ENCODE measurements at regions of chr1 and their contacts with region 1.

Region 1: GRCh38 chr1:94599095-94599813 is 57.7 kb upstream of the F3 start:
- DNase-seq: peak in 3 of 5 donors; percentile 33 to 58 (median 52)
- ATAC-seq: peak; percentile 56 to 90 (median 90)
- H3K4me3 ChIP-seq: no peak overlapping the region
- H3K27ac ChIP-seq: no peak overlapping the region
- H3K4me1 ChIP-seq: peaks cover 0 to 24% (median 0%) of the 10 kb centered on the region in 12 donors
- H3K27me3 ChIP-seq: peaks cover 0 to 26% (median 0%) of the 10 kb centered on the region in 9 donors
- CTCF ChIP-seq: peak in 11 of 12 donors; percentile 41 to 66 (median 52)
- POLR2A ChIP-seq: no peak

Region 2: DNA sequence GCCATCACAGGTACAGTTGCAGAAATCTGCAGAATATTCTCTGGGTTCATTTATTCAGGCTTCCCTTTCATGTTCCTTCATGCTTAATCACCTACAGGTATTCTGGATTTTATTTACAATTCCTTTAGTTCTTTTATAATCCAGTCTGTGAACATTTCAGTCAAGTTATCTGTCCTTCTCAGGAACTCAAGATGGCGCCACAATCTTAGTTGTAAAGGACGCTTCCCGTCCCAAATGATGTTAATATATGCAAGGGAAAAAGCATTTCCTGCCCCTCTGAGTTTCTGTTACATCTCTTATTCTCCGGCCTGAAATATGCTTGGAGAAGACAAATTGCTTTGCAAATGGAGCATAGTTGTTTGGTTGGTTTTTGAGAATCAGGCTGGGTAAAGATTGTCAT is 77.0 kb before region 1 on chr1:
- intact Hi-C with region 1: loop called in 6 of 10 experiments (anchors 2 to 10 kb)
- DNase-seq: no peak
- ATAC-seq: peak in 2 of 4 donors; percentile 55 to 64
- H3K4me3 ChIP-seq: no peak overlapping the region
- H3K27ac ChIP-seq: no peak overlapping the region
- H3K4me1 ChIP-seq: peaks cover 0 to 7% (median 0%) of the 10 kb centered on the region in 12 donors
- H3K27me3 ChIP-seq: no peaks in the 10 kb centered on the region
- CTCF ChIP-seq: peak in 11 of 12 donors; percentile 21 to 70 (median 54)
- POLR2A ChIP-seq: no peak

Region 3: DNA sequence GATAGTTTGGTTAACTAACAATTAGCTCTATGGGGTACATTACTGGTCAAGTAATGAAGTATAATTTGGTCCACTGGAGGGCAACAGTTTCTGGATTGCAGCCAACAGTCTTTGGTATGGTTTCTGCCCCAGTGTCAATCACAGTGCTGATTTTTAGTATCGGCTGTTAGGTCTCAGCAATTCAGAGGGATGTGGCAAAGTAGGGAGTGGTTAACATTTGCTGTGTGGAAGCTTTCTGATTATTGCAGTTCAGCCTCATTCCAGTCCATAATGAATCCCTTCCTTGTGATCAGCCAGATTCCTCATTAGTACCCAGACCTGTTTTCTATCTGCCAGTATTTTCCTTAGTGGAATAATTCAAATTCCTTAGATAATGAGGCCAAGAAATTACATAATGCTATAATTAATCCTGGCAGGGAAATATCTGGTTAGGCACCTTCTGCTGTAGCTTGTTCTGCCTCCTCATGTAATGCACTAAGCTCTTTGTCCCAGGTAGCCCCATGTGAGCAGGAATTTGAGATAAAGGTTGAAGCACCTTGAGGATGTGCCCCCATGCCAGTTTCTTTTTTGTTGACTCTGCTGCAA is 71.7 kb before region 1 on chr1:
- intact Hi-C with region 1: loop called in 7 of 10 experiments (anchors 2 to 10 kb)
- DNase-seq: no peak
- ATAC-seq: peak in 3 of 4 donors; percentile 20 to 59 (median 50)
- H3K4me3 ChIP-seq: no peak overlapping the region
- H3K27ac ChIP-seq: peak overlapping the region in 2 of 12 donors; percentile 25 to 44
- H3K4me1 ChIP-seq: peaks cover 0 to 26% (median under 1%) of the 10 kb centered on the region in 12 donors
- H3K27me3 ChIP-seq: no peaks in the 10 kb centered on the region
- CTCF ChIP-seq: no peak
- POLR2A ChIP-seq: no peak

Region 4: GRCh38 chr1:94654031-94654430 is 54.8 kb after region 1 on chr1:
- intact Hi-C with region 1: no loop called
- DNase-seq: no peak
- ATAC-seq: peak in 3 of 4 donors; percentile 18 to 45 (median 43)
- H3K4me3 ChIP-seq: no peak overlapping the region
- H3K27ac ChIP-seq: peak overlapping the region in 8 of 12 donors; percentile 21 to 81 (median 62)
- H3K4me1 ChIP-seq: peaks cover 0 to 32% (median 11%) of the 10 kb centered on the region in 12 donors
- H3K27me3 ChIP-seq: no peaks in the 10 kb centered on the region
- CTCF ChIP-seq: no peak
- POLR2A ChIP-seq: no peak